HepG2 (cell line): ENCODE measurements at regions of chr6 and their contacts with region 1.

Region 1: GRCh38 chr6:125114248-125114858 is 39.2 kb upstream of the TPD52L1 start:
- DNase-seq: peak; percentile 43
- ATAC-seq: no peak
- H3K4me3 ChIP-seq: no peak overlapping the region
- H3K27ac ChIP-seq: no peak overlapping the region
- H3K4me1 ChIP-seq: no peaks in the 10 kb centered on the region
- H3K27me3 ChIP-seq: no peaks in the 10 kb centered on the region
- CTCF ChIP-seq: peak; percentile 58
- EP300 ChIP-seq: no peak
- POLR2A ChIP-seq: no peak
- RAD21 ChIP-seq: no peak

Region 2: GRCh38 chr6:124870611-124871459 is 243.5 kb before region 1 on chr6:
- CTCF ChIA-PET with region 1: interaction called, 61 read pairs
- POLR2A ChIA-PET with region 1: no interaction called
- in situ Hi-C with region 1: loop called (anchors 5 kb)
- intact Hi-C with region 1: loop called (anchors 1 kb)
- DNase-seq: peak; percentile 14
- ATAC-seq: no peak
- H3K4me3 ChIP-seq: no peak overlapping the region
- H3K27ac ChIP-seq: no peak overlapping the region
- H3K4me1 ChIP-seq: no peaks in the 10 kb centered on the region
- H3K27me3 ChIP-seq: no peaks in the 10 kb centered on the region
- CTCF ChIP-seq: peak; percentile 54
- EP300 ChIP-seq: no peak
- POLR2A ChIP-seq: no peak
- RAD21 ChIP-seq: 0 out of 2 replicates have a peak, but pooled peaks have one; percentile 33

Region 3: DNA sequence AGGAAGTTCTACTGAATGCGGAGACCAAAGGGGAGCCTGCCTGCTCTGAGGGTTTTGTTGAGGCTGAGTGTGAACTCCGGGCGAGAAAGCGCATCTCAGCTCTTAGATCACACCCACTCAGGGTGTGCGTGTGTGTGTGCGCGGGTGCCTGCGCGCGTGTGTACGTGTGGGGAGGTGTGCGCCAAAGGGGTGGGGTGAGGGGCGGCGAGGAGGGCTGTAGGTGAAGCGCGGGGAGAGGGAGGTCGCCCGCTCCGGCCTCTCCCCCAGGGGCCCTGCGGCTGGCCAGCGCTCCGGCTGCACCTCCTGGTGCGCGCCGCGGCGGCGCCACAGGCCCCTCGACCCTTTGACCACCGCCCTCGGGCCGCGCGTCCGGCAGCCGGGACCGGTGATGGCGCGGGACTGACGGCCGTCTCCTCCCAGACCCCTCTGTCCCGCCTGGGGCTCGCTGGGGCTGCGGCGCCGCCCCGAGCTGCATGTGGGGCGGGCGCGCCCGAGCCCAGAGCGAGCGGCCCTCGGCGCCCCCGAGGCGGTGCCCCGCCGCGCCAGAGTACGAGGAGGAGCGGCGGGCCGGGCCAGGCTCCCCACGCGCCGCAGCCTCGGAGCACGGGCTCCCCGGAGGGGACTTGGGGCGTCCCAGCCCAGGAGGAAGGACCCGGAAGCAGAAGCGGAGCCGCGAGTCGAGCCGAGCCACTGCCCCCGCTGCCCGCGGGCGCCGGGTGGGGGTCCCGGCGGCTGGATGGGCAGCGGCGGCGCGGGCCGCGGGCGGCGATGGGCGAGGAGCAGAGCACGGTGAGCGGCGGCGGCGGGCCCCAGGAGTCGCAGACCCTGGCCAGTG is 152.4 kb before region 1 on chr6 and contains the start of gene RNF217:
- CTCF ChIA-PET with region 1: no interaction called
- POLR2A ChIA-PET with region 1: no interaction called
- in situ Hi-C with region 1: no loop called
- intact Hi-C with region 1: loop called (anchors 5 kb)
- DNase-seq: no peak
- ATAC-seq: peak; percentile 79
- H3K4me3 ChIP-seq: peak within 1 kb of the TSS; percentile 42 to 70 (median 63)
- H3K27ac ChIP-seq: no peak within 1 kb of the TSS
- H3K4me1 ChIP-seq: peaks cover 16% of the 10 kb centered on the region
- H3K27me3 ChIP-seq: peaks cover 0 to 12% of the 10 kb centered on the region in 2 experiments; a peak in 2 of 5 replicates
- CTCF ChIP-seq: no peak
- EP300 ChIP-seq: no peak
- POLR2A ChIP-seq: no peak
- RAD21 ChIP-seq: no peak
- total RNA-seq, gene RNF217: 1.2 and 2.2 TPM in 2 replicates

Region 4: DNA sequence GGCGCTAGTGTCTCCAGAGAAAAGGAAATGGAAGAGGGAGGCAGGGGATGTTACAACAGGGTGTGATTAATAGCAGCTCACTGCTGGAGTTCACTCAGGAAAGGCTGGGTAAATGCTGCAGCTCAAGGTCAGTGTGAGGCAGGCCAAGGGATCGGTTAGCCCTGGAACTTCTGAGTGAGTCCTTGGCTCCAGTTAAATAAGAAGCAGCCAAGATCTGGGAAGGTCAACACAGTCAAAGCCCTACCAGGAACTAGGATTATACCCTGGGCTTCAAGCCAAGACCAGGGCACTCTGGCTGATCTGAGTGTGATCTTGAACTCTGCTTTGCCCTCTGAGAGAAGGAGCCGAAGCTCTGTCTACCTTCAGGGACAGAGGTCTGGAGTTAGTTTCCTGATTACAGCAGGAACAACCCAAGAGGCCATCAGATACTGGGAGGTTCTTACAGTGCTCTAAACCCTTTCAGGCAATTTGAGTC is 83.5 kb after region 1 on chr6:
- CTCF ChIA-PET with region 1: no interaction called
- POLR2A ChIA-PET with region 1: no interaction called
- in situ Hi-C with region 1: no loop called
- intact Hi-C with region 1: no loop called
- DNase-seq: no peak
- ATAC-seq: peak; percentile 66
- H3K4me3 ChIP-seq: no peak overlapping the region
- H3K27ac ChIP-seq: no peak overlapping the region
- H3K4me1 ChIP-seq: no peaks in the 10 kb centered on the region
- H3K27me3 ChIP-seq: no peaks in the 10 kb centered on the region
- CTCF ChIP-seq: no peak
- EP300 ChIP-seq: no peak
- POLR2A ChIP-seq: no peak
- RAD21 ChIP-seq: no peak